Transverse colon (tissue), 4 donors: ENCODE measurements at regions of chr10 and their contacts with region 1.

Region 1: DNA sequence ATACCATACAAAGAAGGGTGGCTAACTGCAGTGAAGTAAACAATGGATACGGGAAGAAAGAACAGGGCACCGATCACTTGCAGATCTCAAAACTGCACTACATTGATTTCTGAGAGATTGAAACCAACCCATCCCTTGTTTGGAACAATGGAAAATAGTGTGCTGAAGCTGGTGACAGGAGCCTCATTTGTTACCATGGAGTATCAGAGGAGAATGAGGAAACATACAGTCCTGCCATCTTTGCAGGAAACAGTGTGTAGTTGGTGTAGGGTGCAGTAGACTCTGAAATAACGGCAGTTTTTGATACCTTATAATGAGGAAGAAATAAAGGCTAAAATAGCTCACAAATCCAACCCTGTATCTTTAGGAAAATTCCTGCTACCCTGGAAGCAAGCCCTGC is 118.5 kb downstream of the ARHGAP21 start:
- DNase-seq: no peak
- H3K4me3 ChIP-seq: no peak overlapping the region
- H3K27ac ChIP-seq: no peak overlapping the region
- H3K4me1 ChIP-seq: no peaks in the 10 kb centered on the region
- H3K27me3 ChIP-seq: no peaks in the 10 kb centered on the region
- CTCF ChIP-seq: no peak
- EP300 ChIP-seq: no peak
- POLR2A ChIP-seq: no peak

Region 2: GRCh38 chr10:24589265-24589664 is 15.9 kb before region 1 on chr10:
- in situ Hi-C with region 1: no loop called
- intact Hi-C with region 1: loop called (anchors 1 kb)
- DNase-seq: no peak
- H3K4me3 ChIP-seq: no peak overlapping the region
- H3K27ac ChIP-seq: no peak overlapping the region
- H3K4me1 ChIP-seq: no peaks in the 10 kb centered on the region
- H3K27me3 ChIP-seq: no peaks in the 10 kb centered on the region
- CTCF ChIP-seq: no peak
- EP300 ChIP-seq: no peak
- POLR2A ChIP-seq: no peak